A673 (cell line): ENCODE measurements at regions of chr17 and their contacts with region 1.

Region 1: DNA sequence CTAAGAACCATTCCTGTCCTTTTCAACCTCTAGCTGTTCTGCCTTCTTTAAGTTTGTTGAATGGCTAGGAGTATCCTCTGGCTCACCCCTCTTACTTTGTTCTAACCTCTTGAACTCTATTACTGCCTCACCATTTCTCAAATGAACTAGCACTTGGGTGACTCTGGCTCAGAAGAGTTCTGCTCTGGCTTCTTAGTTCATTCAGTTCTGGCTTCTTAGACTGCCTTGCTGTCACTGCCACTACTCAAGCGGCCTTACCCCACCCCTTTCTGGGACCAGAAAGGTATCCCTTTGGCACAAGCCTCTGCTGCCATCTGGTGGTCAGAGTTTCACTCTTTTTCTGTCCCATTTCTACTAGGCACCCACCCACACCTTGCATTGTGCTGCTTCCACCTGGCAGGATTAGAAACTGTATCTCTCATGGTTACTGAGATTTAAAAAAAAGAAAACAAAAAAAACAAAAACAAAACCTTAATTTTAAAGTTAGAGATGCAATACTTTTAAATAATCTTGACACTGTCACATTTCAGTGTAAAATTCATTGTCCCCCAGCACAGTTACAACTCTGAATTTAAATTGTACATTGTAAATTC is 6.8 kb upstream of the ABCA10 start:
- DNase-seq: peak; percentile 94
- H3K4me3 ChIP-seq: no peak overlapping the region
- H3K27ac ChIP-seq: peak overlapping the region; percentile 39
- H3K4me1 ChIP-seq: peaks cover 16% of the 10 kb centered on the region
- H3K27me3 ChIP-seq: no peaks in the 10 kb centered on the region
- CTCF ChIP-seq: peak; percentile 84

Region 2: DNA sequence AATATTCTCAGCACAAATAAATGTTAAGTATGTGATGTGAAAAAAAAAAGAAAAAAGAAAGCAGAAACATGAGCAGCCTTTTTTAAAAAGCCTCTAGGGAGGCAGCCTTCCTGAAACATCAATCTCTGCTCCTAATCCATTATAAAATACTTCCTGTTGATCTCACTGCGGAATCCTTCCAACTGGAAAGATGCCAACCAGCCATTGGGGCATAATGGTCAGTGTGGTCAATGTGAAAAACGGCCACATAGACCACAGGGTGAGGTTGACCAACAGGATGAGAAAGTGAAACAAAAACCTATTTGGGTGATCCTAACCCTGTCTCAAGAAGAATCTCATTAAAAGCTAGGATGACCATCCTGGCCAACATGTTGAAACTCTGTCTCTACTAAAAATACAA is 254.1 kb before region 1 on chr17:
- CTCF ChIA-PET with region 1: no interaction called
- POLR2A ChIA-PET with region 1: no interaction called
- intact Hi-C with region 1: loop called (anchors 5 kb)
- DNase-seq: peak; percentile 92
- H3K4me3 ChIP-seq: no peak overlapping the region
- H3K27ac ChIP-seq: no peak overlapping the region
- H3K4me1 ChIP-seq: peaks cover 13% of the 10 kb centered on the region
- H3K27me3 ChIP-seq: no peaks in the 10 kb centered on the region
- CTCF ChIP-seq: no peak

Region 3: GRCh38 chr17:69060822-69061221 is 174.6 kb before region 1 on chr17 and contains the start of gene ABCA9:
- CTCF ChIA-PET with region 1: no interaction called
- POLR2A ChIA-PET with region 1: no interaction called
- intact Hi-C with region 1: loop called (anchors 5 kb)
- DNase-seq: peak; percentile 73
- H3K4me3 ChIP-seq: no peak within 1 kb of the TSS
- H3K27ac ChIP-seq: peak within 1 kb of the TSS; percentile 55
- H3K4me1 ChIP-seq: peaks cover 35% of the 10 kb centered on the region
- H3K27me3 ChIP-seq: no peaks in the 10 kb centered on the region
- CTCF ChIP-seq: no peak
- total RNA-seq, gene ABCA9: 1.4 and 2.1 TPM in 2 replicates

Region 4: DNA sequence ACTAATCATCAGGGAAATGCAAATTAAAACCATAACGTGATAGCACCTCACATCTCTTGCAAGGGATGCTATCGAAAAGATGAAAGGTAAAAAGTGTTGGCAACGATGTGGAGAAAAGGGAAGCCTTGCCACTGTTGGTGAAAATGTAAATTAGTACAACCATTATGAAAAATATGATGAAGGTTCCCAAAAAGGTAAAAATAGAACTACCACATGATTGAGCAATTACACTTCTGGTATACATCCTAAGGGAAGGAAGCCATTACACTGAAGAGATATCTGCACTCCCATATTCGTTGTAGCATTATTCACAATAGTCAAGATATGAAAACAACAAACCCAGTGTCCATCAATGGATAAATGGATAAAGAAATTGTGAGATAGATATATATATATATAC is 28.3 kb before region 1 on chr17:
- CTCF ChIA-PET with region 1: no interaction called
- POLR2A ChIA-PET with region 1: no interaction called
- intact Hi-C with region 1: no loop called
- DNase-seq: no peak
- H3K4me3 ChIP-seq: no peak overlapping the region
- H3K27ac ChIP-seq: no peak overlapping the region
- H3K4me1 ChIP-seq: no peaks in the 10 kb centered on the region
- H3K27me3 ChIP-seq: no peaks in the 10 kb centered on the region
- CTCF ChIP-seq: no peak